Dorsolateral prefrontal cortex (tissue), 120 donors: ENCODE measurements at regions of chr7 and their contacts with region 1.

Region 1: GRCh38 chr7:105131033-105131656 is 117.1 kb downstream of the KMT2E start:
- DNase-seq: no peak
- H3K4me3 ChIP-seq: no peak overlapping the region
- H3K27ac ChIP-seq: peak overlapping the region in 56 of 59 donors; percentile 6 to 91 (median 71)
- H3K27me3 ChIP-seq: no peaks in the 10 kb centered on the region
- CTCF ChIP-seq: no peak

Region 2: GRCh38 chr7:105060437-105060836 is 70.7 kb before region 1 on chr7:
- intact Hi-C with region 1: no loop called
- DNase-seq: no peak
- H3K4me3 ChIP-seq: no peak overlapping the region
- H3K27ac ChIP-seq: peak overlapping the region in 15 of 59 donors; percentile 3 to 62 (median 17)
- H3K27me3 ChIP-seq: no peaks in the 10 kb centered on the region
- CTCF ChIP-seq: no peak

Region 3: GRCh38 chr7:105487579-105488571 is 356.7 kb after region 1 on chr7:
- intact Hi-C with region 1: loop called in 1 of 2 experiments (anchors 10 kb)
- DNase-seq: no peak
- H3K4me3 ChIP-seq: no peak overlapping the region
- H3K27ac ChIP-seq: peak overlapping the region in 18 of 59 donors; percentile 7 to 69 (median 30)
- H3K27me3 ChIP-seq: no peaks in the 10 kb centered on the region
- CTCF ChIP-seq: peak in 54 of 56 donors; percentile 34 to 79 (median 59)